Cardiac septum (tissue), 1 donor: ENCODE measurements at regions of chr1 and their contacts with region 1.

Region 1: DNA sequence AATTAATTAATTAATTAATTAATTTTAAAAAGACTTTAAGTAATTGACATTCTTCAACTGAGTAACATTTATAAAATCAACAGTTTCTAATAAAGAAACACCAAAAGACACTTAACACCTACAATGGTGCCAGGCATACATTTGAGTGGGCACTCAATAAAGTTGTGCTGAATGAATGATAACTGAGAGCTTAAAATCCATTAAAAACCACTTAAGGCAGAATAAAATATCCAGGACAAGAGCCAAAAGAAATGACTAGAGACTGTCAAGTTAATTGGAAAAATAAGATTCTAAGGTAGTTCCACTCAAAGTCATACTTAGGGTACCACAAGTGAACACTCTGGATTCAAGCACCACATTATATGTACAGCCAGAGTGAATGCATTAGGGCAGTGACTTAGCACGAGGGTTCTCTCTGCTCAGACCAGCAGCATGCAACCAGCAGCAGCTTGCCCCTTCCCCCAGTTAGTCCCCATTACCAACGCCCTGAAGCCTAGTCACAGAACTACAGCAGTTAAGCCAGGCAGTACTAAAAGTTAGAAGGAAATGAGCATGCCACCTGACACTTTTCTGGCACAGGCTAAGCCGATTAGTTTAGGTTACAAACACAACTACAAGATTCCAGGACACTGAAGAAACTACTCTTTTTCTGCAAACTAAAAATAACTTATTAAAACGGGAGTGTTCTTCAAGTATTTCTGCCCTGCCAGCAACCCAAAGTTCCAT is 46.5 kb downstream of the LUZP1 start:
- DNase-seq: no peak

Region 2: GRCh38 chr1:23168457-23169194 is 46.4 kb after region 1 on chr1 and contains the start of gene LUZP1:
- intact Hi-C with region 1: loop called (anchors 5 kb)
- DNase-seq: peak; percentile 97
- total RNA-seq, gene LUZP1: 46.5 TPM